Panc1 (cell line): ENCODE measurements at regions of chr10 and their contacts with region 1.

Region 1: DNA sequence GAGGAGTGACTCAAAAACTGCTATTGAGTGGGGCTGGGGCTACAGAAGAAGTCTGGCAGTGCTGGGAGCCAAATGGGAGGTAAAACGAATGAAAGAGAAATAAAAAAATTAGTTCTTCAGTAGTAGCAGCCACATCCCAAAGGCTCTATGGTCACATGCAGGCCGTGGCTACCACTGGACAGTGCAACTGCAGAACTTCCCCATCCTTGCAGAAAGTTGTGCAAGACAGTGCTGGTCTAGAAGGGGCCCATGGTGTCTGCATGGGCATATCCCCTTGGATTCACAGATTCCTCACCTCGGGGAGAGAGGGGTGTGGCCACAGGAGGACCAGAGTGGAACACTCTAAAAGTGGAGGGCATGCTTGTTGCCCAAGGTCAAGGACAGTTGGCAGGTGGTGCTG is 47.6 kb downstream of the RPS24 start:
- DNase-seq: no peak
- ATAC-seq: no peak
- H3K4me3 ChIP-seq: no peak overlapping the region
- H3K27ac ChIP-seq: no peak overlapping the region
- H3K4me1 ChIP-seq: no peaks in the 10 kb centered on the region
- H3K27me3 ChIP-seq: no peaks in the 10 kb centered on the region; the same call in 1 of the 2 replicates
- CTCF ChIP-seq: no peak

Region 2: DNA sequence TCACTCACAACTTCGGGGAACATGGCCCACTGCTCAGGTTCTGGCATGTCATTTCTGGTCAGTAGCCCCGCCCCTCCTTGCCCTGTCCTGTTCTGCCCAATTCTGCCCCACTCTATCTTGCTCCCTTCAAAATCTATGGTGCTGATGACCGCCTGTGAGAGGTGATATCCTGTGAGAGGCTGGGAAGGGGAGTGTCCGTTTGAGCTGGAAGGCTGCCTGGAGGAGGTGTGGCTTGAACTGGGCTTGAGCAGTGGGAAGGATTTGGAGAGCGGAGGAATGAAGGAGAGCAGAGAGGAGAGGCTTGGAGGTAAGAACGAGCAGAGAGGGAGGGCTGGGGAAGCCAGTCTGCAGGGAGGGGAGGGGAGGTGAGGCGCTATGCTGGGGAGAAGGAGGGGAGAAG is 97.6 kb after region 1 on chr10:
- CTCF ChIA-PET with region 1: interaction called, 11 read pairs
- POLR2A ChIA-PET with region 1: no interaction called
- in situ Hi-C with region 1: no loop called
- intact Hi-C with region 1: no loop called
- DNase-seq: no peak
- ATAC-seq: no peak; the same call in 1 of the 2 replicates
- H3K4me3 ChIP-seq: no peak overlapping the region
- H3K27ac ChIP-seq: no peak overlapping the region
- H3K4me1 ChIP-seq: no peaks in the 10 kb centered on the region
- H3K27me3 ChIP-seq: peaks cover 24% of the 10 kb centered on the region
- CTCF ChIP-seq: no peak